Activated CD4-positive, alpha-beta T cell treated with anti-CD3 and anti-CD28 coated beads for 36 hours (primary cell): ENCODE measurements at regions of chr2 and their contacts with region 1.

Region 1: GRCh38 chr2:112884869-112885505 is 26.0 kb upstream of the IL37 start:
- DNase-seq: peak; percentile 85
- ATAC-seq: peak; percentile 87
- H3K4me3 Mint-ChIP-seq: no peak overlapping the region
- H3K27ac Mint-ChIP-seq: peak overlapping the region; percentile 1
- H3K4me1 Mint-ChIP-seq: peaks cover 23% of the 10 kb centered on the region
- H3K27me3 Mint-ChIP-seq: no peaks in the 10 kb centered on the region

Region 2: GRCh38 chr2:112726497-112727190 is 158.3 kb before region 1 on chr2:
- CTCF ChIA-PET with region 1: interaction called, 19 read pairs
- POLR2A ChIA-PET with region 1: no interaction called
- intact Hi-C with region 1: no loop called
- DNase-seq: peak; percentile 94
- ATAC-seq: peak; percentile 98
- H3K4me3 Mint-ChIP-seq: no peak overlapping the region
- H3K27ac Mint-ChIP-seq: no peak overlapping the region
- H3K4me1 Mint-ChIP-seq: peaks cover 3% of the 10 kb centered on the region
- H3K27me3 Mint-ChIP-seq: no peaks in the 10 kb centered on the region

Region 3: GRCh38 chr2:112764071-112765044 is 120.6 kb before region 1 on chr2 and contains the start of gene CKAP2L:
- CTCF ChIA-PET with region 1: interaction called, 7 read pairs
- POLR2A ChIA-PET with region 1: no interaction called
- intact Hi-C with region 1: loop called in 1 of 2 experiments (anchors 1 kb)
- DNase-seq: peak; percentile 98
- ATAC-seq: peak; percentile 97
- H3K4me3 Mint-ChIP-seq: peak within 1 kb of the TSS; percentile 96
- H3K27ac Mint-ChIP-seq: peak within 1 kb of the TSS; percentile 95
- H3K4me1 Mint-ChIP-seq: peaks cover 25% of the 10 kb centered on the region
- H3K27me3 Mint-ChIP-seq: no peaks in the 10 kb centered on the region
- total RNA-seq, gene CKAP2L: 38.4 to 46.7 TPM

Region 4: GRCh38 chr2:112904883-112905282 is 19.9 kb after region 1 on chr2:
- CTCF ChIA-PET with region 1: interaction called, 20 read pairs
- POLR2A ChIA-PET with region 1: no interaction called
- intact Hi-C with region 1: no loop called
- DNase-seq: no peak
- ATAC-seq: no peak
- H3K4me3 Mint-ChIP-seq: no peak overlapping the region
- H3K27ac Mint-ChIP-seq: no peak overlapping the region
- H3K4me1 Mint-ChIP-seq: no peaks in the 10 kb centered on the region
- H3K27me3 Mint-ChIP-seq: no peaks in the 10 kb centered on the region

Region 5: DNA sequence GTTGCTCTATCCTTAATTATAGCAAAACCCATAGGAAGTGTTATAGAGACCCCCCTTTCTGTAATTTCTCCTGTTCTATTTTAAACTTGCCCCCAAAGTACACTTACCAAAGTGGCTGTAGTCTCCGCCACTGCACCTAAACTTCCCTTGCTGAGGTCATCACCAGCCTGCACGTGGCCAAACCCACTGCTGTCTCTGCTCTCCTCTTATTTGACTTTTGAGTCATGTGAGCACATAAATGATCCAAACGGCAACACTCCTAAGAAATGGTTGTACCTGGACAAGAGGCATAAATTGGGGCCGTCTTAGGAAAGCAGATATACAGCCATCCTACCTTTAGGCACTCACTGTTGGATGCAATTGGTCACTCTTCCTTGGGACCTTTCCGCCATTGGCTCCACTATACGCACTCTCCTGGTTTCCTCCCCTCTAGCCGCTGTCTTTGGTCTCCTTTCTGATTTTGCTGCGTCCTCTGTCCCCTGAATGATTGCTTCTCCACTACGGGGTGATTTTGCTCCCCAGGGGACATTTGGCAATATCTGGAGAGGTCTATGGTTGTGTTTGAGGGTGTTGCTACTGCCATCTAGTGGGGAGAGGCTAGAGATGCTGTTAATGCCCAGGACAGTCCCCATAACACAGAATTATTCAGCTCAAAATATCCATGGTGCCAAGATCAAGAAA is 73.6 kb after region 1 on chr2:
- CTCF ChIA-PET with region 1: interaction called, 15 read pairs
- POLR2A ChIA-PET with region 1: no interaction called
- intact Hi-C with region 1: no loop called
- DNase-seq: peak; percentile 48
- ATAC-seq: peak; percentile 94
- H3K4me3 Mint-ChIP-seq: no peak overlapping the region
- H3K27ac Mint-ChIP-seq: no peak overlapping the region
- H3K4me1 Mint-ChIP-seq: no peaks in the 10 kb centered on the region
- H3K27me3 Mint-ChIP-seq: no peaks in the 10 kb centered on the region